ENCODE measurements at regions of chr11 and their contacts with region 1.

Region 1: DNA sequence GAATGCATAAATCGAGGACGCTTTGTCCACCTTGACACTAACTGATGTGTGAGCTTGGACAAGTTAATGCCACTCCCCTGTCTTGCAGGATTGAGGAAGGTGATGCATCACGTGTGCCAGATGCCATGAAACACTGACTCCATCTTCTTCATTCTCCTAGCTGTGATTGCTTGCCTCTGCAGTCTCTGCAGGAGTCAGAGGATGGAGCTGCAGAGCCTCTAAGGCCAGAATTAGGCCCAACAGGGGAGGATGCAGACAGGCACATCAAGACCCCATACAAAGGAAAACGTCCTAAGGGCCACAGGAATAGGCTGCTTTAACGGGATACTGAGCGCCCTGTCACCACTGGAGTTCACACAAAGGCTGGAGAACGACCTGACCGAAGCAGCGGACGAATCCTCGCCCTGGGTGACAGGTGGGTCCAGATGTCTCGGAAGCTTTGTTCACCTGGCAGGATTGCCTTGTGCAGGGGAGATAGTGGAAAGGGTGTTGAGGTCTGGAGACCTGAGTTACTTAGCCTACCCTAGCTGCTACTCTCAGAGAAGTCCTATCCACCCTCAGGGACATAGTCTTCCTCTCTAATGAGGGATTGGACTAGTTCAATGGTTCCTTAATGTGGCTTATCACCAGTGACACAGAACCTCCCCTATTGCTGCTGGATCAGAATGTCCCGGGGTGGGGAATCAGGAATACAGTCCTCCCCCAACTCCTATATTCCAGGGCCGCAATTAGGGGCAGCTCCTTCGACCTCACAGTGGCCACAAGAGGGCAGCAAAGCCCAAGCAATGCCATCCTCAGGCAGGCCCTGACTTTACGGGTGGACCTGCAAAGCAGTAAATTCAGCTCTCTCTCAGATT is 32.4 kb downstream of the DBX1 start:
- DNase-seq: peak; percentile 75
- ATAC-seq: peak; percentile 82

Region 2: GRCh38 chr11:19842505-19842904 is 285.4 kb before region 1 on chr11:
- intact Hi-C with region 1: no loop called
- DNase-seq: no peak
- ATAC-seq: no peak

Region 3: DNA sequence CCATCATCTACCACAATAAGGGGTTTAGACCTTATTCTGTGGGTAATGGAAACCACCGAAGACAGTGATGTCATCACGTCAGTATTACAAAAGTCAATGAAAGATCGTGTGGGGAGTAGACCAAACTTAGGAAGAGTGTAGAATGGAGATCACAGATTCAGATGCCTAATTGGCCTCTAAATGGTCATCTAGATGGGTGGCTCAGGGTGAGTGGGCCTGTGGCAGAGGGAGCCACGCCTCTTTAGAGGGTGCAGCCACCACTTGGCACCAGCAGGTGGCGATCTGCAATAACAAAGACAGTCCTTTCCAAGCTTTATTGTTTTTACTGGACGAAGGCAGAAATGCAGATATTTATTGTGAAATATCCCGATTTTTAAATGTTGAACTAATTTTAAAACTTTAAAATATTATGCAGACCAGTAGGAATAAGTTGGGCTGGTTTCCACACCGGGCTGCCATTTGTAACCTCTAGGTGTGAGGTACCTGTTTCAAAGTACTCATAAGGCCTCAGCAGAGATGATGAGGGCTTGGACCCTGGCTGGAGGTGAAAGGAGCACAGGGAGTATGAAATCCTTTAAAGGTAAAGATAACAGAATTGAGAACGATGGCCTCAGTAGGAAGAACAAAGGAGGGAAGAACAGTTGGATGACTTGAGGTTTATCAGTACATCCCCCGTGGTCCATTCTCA is 189.6 kb before region 1 on chr11:
- intact Hi-C with region 1: loop called (anchors 5 kb)
- DNase-seq: peak; percentile 57
- ATAC-seq: peak; percentile 75

Region 4: GRCh38 chr11:19995131-19995530 is 132.8 kb before region 1 on chr11:
- intact Hi-C with region 1: no loop called
- DNase-seq: no peak
- ATAC-seq: peak; percentile 60

Region 5: DNA sequence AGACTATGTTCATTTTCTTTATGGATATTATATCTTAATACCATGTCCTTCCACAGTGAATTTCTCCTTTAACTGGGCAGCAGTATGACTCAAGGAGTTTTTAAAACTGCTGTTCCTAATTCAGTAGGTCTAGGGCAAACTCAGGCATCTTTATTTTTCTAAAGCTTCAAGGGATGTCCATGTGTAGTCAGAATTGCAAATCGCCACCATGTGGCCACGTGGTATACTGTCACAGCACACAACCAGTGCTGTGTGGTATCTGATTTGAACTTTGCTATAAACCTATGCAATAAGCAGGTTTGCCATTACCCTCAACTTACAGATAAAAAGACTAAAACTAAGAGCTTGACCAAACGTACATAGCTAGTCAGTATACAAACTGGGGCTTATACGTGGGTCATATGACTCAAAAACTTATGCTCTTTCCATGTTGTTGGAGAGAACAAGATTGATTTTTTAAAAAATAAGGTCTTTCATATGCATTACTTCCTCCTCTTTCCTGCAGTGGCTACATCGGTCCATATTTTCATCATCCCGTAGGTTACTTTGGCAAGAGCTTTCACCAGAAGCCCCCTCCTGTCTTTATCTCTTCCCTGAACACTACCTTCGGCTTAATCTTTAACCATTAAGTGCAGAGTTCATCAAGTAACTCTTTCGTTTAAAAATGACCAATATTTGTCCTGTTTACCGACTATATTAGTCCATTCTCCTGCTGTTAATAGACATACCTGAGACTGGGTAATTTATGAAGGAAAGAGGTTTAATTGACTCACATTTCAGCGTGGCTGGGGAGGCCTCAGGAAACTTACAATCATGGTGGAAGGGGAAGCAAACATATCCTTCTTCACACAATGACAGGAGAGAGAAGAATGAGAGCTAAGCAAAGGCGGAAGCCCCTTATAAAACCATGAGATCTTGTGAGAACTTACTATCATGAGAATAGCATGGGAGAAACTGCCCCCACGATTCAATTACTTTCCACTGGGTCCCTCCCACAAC is 227.6 kb after region 1 on chr11:
- intact Hi-C with region 1: loop called (anchors 5 kb)
- DNase-seq: no peak
- ATAC-seq: peak; percentile 60

Measured in Right ventricle myocardium superior (tissue), 1 donor.